CD4-positive, alpha-beta T cell (primary cell): ENCODE measurements at regions of chr15 and their contacts with region 1.

Region 1: GRCh38 chr15:58770857-58771620 is at the start of gene MINDY2:
- DNase-seq: peak; percentile 86 to 97 (median 92)
- ATAC-seq: peak; percentile 93
- H3K4me3 ChIP-seq: peak within 1 kb of the TSS; percentile 86
- H3K4me3 Mint-ChIP-seq: no peak within 1 kb of the TSS
- H3K27ac ChIP-seq: peak within 1 kb of the TSS; percentile 74 to 83
- H3K27ac Mint-ChIP-seq: peak within 1 kb of the TSS; percentile 89
- H3K4me1 ChIP-seq: peaks cover 33% of the 10 kb centered on the region
- H3K4me1 Mint-ChIP-seq: peaks cover 20% of the 10 kb centered on the region
- H3K27me3 ChIP-seq: no peaks in the 10 kb centered on the region
- H3K27me3 Mint-ChIP-seq: no peaks in the 10 kb centered on the region
- CTCF ChIP-seq: no peak
- total RNA-seq, gene MINDY2: 7.5 to 7.7 TPM

Region 2: DNA sequence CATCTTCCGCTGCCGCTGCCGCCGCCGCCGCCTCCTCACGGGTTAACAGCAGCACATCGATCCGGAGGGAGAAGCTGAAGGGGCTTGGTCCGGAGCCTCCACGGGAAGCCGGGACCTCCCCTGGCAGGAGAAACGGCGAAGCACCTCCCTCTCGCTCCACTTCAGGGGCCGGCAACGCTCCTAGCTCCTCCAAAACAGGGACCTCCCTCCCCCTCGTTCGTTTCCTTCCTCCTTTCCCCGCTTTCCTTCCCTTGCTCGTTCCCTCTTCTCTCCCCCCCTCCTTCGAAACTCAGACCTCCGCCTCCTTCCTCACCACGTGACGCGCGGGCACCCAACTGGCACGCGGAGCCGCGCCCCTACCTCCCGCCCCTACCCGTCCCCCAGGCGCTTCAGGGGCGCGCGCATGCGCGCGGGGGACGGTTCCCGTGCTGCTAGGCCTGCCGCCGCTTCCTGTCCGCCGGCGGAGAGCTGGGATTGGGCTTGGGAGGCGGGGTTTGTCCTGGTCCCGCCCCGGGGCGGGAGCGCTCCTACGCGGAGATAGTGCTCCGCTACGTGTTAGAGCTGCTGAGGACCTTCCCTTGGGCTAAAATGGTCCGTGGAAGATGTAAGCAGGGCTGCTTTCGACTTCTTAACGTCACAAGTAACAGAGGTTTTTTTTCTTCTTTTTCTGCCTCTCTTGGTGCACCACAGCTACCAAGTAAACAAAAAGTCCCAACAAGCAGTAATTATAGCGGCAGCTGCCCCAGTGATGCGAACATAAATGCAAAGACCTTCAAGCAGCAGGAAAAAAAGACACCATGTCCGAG is 21.3 kb before region 1 on chr15 and contains the start of gene ADAM10:
- CTCF ChIA-PET with region 1: interaction called, 38 read pairs
- POLR2A ChIA-PET with region 1: interaction called, 179 read pairs
- intact Hi-C with region 1: loop called (anchors 1 to 2 kb)
- DNase-seq: peak; percentile 92 to 99 (median 98)
- ATAC-seq: peak; percentile 89
- H3K4me3 ChIP-seq: peak within 1 kb of the TSS; percentile 97
- H3K4me3 Mint-ChIP-seq: peak within 1 kb of the TSS; percentile 97
- H3K27ac ChIP-seq: peak within 1 kb of the TSS; percentile 73 to 81
- H3K27ac Mint-ChIP-seq: peak within 1 kb of the TSS; percentile 90
- H3K4me1 ChIP-seq: peaks cover 19% of the 10 kb centered on the region
- H3K4me1 Mint-ChIP-seq: peaks cover 46% of the 10 kb centered on the region
- H3K27me3 ChIP-seq: no peaks in the 10 kb centered on the region
- H3K27me3 Mint-ChIP-seq: no peaks in the 10 kb centered on the region
- CTCF ChIP-seq: no peak
- total RNA-seq, gene ADAM10: 70.5 to 80.4 TPM

Region 3: GRCh38 chr15:59104912-59105732 is 334.1 kb after region 1 on chr15 and contains the start of gene CCNB2:
- CTCF ChIA-PET with region 1: no interaction called
- POLR2A ChIA-PET with region 1: no interaction called
- intact Hi-C with region 1: loop called in 1 of 2 experiments (anchors 10 kb)
- DNase-seq: peak; percentile 68 to 95 (median 79)
- ATAC-seq: peak; percentile 99
- H3K4me3 ChIP-seq: peak within 1 kb of the TSS; percentile 71
- H3K4me3 Mint-ChIP-seq: peak within 1 kb of the TSS; percentile 97
- H3K27ac ChIP-seq: peak within 1 kb of the TSS in 1 of 2 donors; percentile 26
- H3K27ac Mint-ChIP-seq: peak within 1 kb of the TSS; percentile 99
- H3K4me1 ChIP-seq: peaks cover 9% of the 10 kb centered on the region
- H3K4me1 Mint-ChIP-seq: peaks cover 17% of the 10 kb centered on the region
- H3K27me3 ChIP-seq: no peaks in the 10 kb centered on the region
- H3K27me3 Mint-ChIP-seq: no peaks in the 10 kb centered on the region
- CTCF ChIP-seq: no peak
- total RNA-seq, gene CCNB2: 0.85 TPM in 1 of 2 experiments, not detected in the other

Region 4: DNA sequence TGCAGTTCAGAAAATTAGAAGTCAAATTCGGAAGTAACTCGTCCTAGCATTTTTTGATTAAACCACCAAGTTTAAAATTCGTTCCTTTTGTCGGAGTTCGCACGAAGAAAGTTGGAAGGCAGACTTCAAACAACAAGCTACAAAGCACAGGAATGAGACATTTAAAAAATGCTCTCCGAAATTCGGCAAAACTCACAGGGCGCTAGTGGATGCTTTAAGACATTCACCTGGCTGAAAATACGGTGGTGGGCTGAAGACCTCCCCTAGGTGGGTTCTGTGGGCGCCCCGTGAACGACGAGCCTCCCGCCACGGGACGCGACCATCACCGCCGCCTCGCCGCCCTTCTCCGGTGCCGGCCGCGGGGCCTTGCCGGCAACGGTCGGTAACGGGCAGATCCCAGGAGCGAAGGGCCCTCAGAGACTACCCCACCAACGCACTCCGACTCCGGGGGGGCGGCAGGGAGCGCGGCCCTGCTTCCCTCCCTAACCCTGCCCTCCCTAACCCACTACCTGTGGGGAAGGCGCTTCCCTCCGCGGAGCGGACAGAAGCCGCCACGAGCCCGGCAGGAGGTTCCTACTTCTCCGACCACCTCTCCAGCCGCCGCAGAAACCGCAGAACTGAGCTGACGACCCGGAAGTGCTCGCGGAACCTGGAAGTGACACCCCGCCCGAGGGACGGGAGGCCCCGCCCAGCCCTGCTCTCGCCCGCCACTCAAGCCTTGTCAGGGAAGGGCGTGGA is 886.0 kb after region 1 on chr15 and contains the start of gene GTF2A2:
- CTCF ChIA-PET with region 1: no interaction called
- POLR2A ChIA-PET with region 1: no interaction called
- intact Hi-C with region 1: loop called in 1 of 2 experiments (anchors 10 kb)
- DNase-seq: peak; percentile 82 to 96 (median 89)
- ATAC-seq: peak; percentile 98
- H3K4me3 ChIP-seq: peak within 1 kb of the TSS; percentile 94
- H3K4me3 Mint-ChIP-seq: peak within 1 kb of the TSS; percentile 57
- H3K27ac ChIP-seq: peak within 1 kb of the TSS; percentile 77 to 86
- H3K27ac Mint-ChIP-seq: no peak within 1 kb of the TSS
- H3K4me1 ChIP-seq: peaks cover 17% of the 10 kb centered on the region
- H3K4me1 Mint-ChIP-seq: no peaks in the 10 kb centered on the region
- H3K27me3 ChIP-seq: no peaks in the 10 kb centered on the region
- H3K27me3 Mint-ChIP-seq: no peaks in the 10 kb centered on the region
- CTCF ChIP-seq: no peak
- total RNA-seq, gene GTF2A2: 40.3 to 44.6 TPM